GM12878 (cell line): ENCODE measurements at regions of chr3 and their contacts with region 1.

Region 1: DNA sequence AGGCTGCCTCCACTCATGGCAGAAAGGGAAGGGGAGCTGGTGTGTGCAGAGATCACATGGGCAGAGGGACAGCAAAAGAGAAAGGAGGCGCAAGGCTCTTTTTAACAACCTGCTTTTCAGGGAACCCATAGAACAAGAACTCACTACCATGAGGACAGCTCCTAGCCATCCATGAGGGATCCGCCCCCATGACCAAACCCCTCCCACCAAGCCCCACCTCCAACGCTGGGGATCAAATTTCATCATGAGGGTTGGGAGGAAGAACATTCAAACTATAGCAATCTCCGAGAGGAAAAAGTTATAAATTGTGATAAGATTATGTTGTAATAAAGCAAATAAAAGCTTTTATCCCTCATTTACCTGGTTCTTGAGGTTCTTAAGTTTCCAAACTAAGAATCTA is 84.7 kb upstream of the LMCD1 start:
- DNase-seq: no peak
- ATAC-seq: peak; percentile 77
- H3K4me3 ChIP-seq: no peak overlapping the region
- H3K27ac ChIP-seq: no peak overlapping the region
- H3K4me1 ChIP-seq: no peaks in the 10 kb centered on the region
- H3K27me3 ChIP-seq: no peaks in the 10 kb centered on the region
- CTCF ChIP-seq: no peak
- EP300 ChIP-seq: no peak
- POLR2A ChIP-seq: no peak
- RAD21 ChIP-seq: no peak

Region 2: GRCh38 chr3:8239718-8240695 is 177.0 kb before region 1 on chr3:
- CTCF ChIA-PET with region 1: interaction called, 43 read pairs
- POLR2A ChIA-PET with region 1: no interaction called
- RAD21 ChIA-PET with region 1: interaction called, 18 read pairs
- SMC1A ChIA-PET with region 1: interaction called, 17 read pairs
- in situ Hi-C with region 1: no loop called
- intact Hi-C with region 1: no loop called
- DNase-seq: no peak
- ATAC-seq: peak; percentile 89
- H3K4me3 ChIP-seq: no peak overlapping the region
- H3K27ac ChIP-seq: no peak overlapping the region
- H3K4me1 ChIP-seq: no peaks in the 10 kb centered on the region
- H3K27me3 ChIP-seq: no peaks in the 10 kb centered on the region
- CTCF ChIP-seq: peak; percentile 72 to 91 (median 89)
- EP300 ChIP-seq: no peak
- POLR2A ChIP-seq: no peak
- RAD21 ChIP-seq: peak; percentile 63

Region 3: DNA sequence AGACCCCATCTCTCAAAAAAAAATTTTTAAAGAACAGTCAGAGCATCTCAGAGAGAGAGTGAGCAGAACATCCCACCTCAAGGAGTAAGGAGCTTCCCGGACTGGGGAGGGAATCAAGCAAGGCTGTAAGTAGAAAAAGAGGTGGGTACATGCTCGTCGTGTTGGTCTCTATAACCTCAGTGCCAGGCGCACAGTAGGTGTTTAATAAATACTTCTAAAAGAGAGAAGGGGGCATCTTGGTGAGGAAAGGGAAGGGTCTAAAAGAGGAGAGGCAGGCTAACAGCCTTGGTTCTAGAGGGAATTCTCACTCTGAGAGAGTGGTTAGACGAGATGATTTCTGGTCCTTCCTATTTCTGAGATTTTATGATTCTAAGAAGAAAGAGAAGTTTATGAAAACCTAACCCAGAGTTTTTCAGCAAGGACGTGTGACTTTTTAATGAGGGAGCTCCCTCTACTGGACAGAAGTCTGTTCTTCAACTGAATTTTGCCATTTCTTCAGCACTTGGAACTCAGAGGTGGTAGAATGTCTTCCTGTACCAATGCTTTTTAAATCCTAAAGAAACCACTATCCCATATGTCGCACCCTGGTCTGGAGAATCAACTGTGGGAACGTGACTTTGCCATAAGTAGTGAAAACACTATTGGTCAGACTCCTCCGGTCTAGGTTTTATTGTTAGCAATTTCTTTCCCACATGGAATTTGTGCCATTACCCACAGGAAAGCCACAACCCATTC is 115.1 kb before region 1 on chr3:
- CTCF ChIA-PET with region 1: interaction called, 11 read pairs
- POLR2A ChIA-PET with region 1: no interaction called
- RAD21 ChIA-PET with region 1: no interaction called
- SMC1A ChIA-PET with region 1: interaction called, 10 read pairs
- in situ Hi-C with region 1: no loop called
- intact Hi-C with region 1: no loop called
- DNase-seq: no peak
- ATAC-seq: peak; percentile 73
- H3K4me3 ChIP-seq: no peak overlapping the region
- H3K27ac ChIP-seq: no peak overlapping the region
- H3K4me1 ChIP-seq: no peaks in the 10 kb centered on the region
- H3K27me3 ChIP-seq: no peaks in the 10 kb centered on the region
- CTCF ChIP-seq: peak; percentile 62 to 71 (median 65)
- EP300 ChIP-seq: no peak
- POLR2A ChIP-seq: no peak
- RAD21 ChIP-seq: peak; percentile 56

Region 4: GRCh38 chr3:8324740-8325139 is 92.2 kb before region 1 on chr3:
- CTCF ChIA-PET with region 1: interaction called, 136 read pairs
- POLR2A ChIA-PET with region 1: interaction called, 3 read pairs
- RAD21 ChIA-PET with region 1: interaction called, 94 read pairs
- SMC1A ChIA-PET with region 1: interaction called, 74 read pairs
- in situ Hi-C with region 1: loop called (anchors 5 kb)
- intact Hi-C with region 1: loop called (anchors 1 kb)
- DNase-seq: no peak
- ATAC-seq: peak; percentile 92
- H3K4me3 ChIP-seq: no peak overlapping the region
- H3K27ac ChIP-seq: no peak overlapping the region
- H3K4me1 ChIP-seq: no peaks in the 10 kb centered on the region
- H3K27me3 ChIP-seq: no peaks in the 10 kb centered on the region
- CTCF ChIP-seq: peak; percentile 37 to 64 (median 53); a peak in 4 of 6 replicates
- EP300 ChIP-seq: no peak
- POLR2A ChIP-seq: no peak
- RAD21 ChIP-seq: peak; percentile 34; the same call in 1 of the 2 replicates